MCF 10A (cell line): ENCODE measurements at regions of chr4 and their contacts with region 1.

Region 1: DNA sequence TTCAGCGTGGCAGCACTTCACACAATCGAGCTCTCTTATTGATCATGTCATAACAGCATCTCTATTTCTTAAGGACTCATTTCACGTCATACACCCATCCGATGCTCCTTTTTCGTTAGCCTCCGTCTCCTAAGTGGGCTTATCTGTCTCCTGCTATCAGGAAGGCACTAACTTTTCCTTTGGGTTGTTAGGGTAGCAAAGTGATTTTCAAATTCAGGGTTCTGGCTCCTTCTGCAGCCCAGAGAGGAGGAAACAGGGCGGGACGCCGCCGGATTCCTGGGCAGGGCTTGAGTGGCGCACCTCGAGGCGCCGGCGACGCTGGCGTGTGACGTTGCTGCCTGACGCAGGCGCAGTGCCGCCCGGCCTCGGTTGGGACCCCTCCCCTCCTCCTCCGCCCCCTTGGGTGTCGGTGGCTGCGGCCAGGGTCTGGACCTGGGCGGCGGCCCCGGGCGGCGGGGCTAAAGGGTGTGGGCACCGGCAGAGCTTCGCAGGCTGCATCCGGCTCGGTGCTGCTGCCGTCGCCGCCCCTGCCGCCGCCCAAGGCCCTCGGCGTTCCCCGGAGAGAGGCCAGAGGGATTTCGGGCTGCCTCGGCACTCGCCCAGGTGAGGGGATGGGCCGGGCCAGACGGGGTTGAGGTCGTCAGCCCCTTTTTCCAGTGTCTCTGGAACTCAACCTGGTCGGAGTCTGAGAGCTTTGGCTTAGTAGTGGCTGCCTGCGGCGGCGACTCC is at the start of gene BLTP1:
- DNase-seq: peak; percentile 79
- H3K4me3 Mint-ChIP-seq: peak within 1 kb of the TSS; percentile 93
- H3K27ac Mint-ChIP-seq: peak within 1 kb of the TSS; percentile 95
- H3K4me1 Mint-ChIP-seq: peaks cover 11% of the 10 kb centered on the region
- H3K27me3 Mint-ChIP-seq: no peaks in the 10 kb centered on the region
- CTCF ChIP-seq: no peak
- total RNA-seq, gene BLTP1: 28.0 and 33.1 TPM in 2 replicates

Region 2: DNA sequence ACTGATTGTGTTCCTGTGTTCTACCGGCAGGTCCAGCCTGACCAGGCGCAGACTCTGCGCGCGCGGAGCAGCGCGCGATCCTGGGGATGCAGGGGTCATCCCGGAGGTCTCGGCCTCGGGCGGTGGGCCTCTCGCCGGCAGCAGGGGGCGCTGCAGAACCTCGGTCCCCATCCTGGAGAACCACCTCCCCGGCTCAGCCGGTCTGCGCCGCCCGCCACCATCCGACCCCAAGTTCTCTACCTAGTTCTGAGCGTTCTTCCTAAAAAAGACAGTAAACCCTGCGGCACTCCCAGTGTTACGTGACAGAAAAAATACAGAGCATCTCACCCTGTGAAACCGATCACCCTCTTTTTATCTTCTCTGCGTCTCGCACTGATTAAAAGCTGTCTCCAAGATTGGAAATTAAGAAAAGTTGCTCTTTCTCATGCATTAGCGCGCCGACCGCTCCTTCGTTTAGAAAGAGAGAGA is 201.9 kb before region 1 on chr4:
- CTCF ChIA-PET with region 1: interaction called, 3 read pairs
- POLR2A ChIA-PET with region 1: interaction called, 3 read pairs
- intact Hi-C with region 1: loop called (anchors 5 kb)
- DNase-seq: peak; percentile 44
- H3K4me3 Mint-ChIP-seq: peak overlapping the region; percentile 69
- H3K27ac Mint-ChIP-seq: no peak overlapping the region
- H3K4me1 Mint-ChIP-seq: no peaks in the 10 kb centered on the region
- H3K27me3 Mint-ChIP-seq: peaks cover 39% of the 10 kb centered on the region
- CTCF ChIP-seq: peak; percentile 63

Region 3: DNA sequence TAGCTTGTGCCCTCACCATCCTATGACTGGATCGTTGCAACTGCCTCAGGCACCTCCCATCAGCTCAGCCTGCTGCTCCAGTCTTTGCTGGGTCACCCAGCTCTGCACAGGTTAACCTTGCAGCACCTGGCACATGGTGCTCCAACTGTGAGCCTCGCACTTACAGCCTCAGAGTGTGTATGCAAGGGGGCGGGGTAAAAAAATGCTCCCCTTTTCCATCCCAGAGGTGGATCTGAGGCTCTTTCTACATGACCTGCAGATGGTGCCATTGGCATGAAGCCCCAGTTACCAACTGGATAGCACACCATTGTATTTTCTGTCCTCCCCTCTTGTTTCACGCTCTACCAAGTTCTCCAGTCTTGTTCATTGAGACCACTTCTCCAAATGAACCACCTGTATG is 154.1 kb before region 1 on chr4:
- CTCF ChIA-PET with region 1: no interaction called
- POLR2A ChIA-PET with region 1: no interaction called
- intact Hi-C with region 1: loop called (anchors 1 kb)
- DNase-seq: peak; percentile 33
- H3K4me3 Mint-ChIP-seq: no peak overlapping the region
- H3K27ac Mint-ChIP-seq: no peak overlapping the region
- H3K4me1 Mint-ChIP-seq: peaks cover 6% of the 10 kb centered on the region
- H3K27me3 Mint-ChIP-seq: peaks cover 13% of the 10 kb centered on the region
- CTCF ChIP-seq: no peak

Region 4: GRCh38 chr4:122045533-122045932 is 106.6 kb before region 1 on chr4:
- CTCF ChIA-PET with region 1: no interaction called
- POLR2A ChIA-PET with region 1: interaction called, 3 read pairs
- intact Hi-C with region 1: loop called (anchors 1 kb)
- DNase-seq: peak; percentile 100
- H3K4me3 Mint-ChIP-seq: no peak overlapping the region
- H3K27ac Mint-ChIP-seq: no peak overlapping the region
- H3K4me1 Mint-ChIP-seq: peaks cover 15% of the 10 kb centered on the region
- H3K27me3 Mint-ChIP-seq: no peaks in the 10 kb centered on the region
- CTCF ChIP-seq: no peak